ENCODE measurements at regions of chr15 and their contacts with region 1.

Region 1: GRCh38 chr15:99059010-99059981 is 45.6 kb upstream of the SYNM start:
- DNase-seq: peak; percentile 72
- ATAC-seq: peak; percentile 92
- H3K4me3 Mint-ChIP-seq: peak overlapping the region; percentile 53
- H3K27ac Mint-ChIP-seq: peak overlapping the region; percentile 60
- H3K4me1 Mint-ChIP-seq: peaks cover 6% of the 10 kb centered on the region
- H3K27me3 Mint-ChIP-seq: peaks cover 29% of the 10 kb centered on the region

Region 2: DNA sequence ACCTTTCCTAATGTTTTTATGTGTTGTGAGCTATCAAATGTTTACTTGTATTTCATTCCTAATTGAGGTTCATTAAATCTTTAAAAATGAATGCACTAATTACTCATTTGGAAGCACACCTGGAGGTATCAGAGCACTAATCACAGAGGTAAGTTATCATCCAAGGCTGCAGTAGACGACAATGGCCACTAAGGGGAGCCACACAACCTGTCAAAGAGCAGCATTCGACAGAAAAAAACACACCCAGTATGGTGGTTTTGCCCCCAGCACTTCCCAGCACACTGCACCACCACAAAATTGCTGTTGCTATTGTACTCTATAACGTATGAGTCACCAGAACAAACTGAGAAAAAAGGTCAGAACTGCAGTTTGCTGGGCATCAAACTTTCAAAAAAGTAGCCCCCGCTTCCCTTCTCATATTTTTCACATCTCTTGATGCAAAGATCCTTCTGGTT is 616.9 kb before region 1 on chr15:
- CTCF ChIA-PET with region 1: no interaction called
- POLR2A ChIA-PET with region 1: no interaction called
- intact Hi-C with region 1: loop called in 1 of 2 experiments (anchors 5 kb)
- DNase-seq: peak; percentile 81
- ATAC-seq: peak; percentile 97
- H3K4me3 Mint-ChIP-seq: no peak overlapping the region
- H3K27ac Mint-ChIP-seq: no peak overlapping the region
- H3K4me1 Mint-ChIP-seq: peaks cover 3% of the 10 kb centered on the region
- H3K27me3 Mint-ChIP-seq: peaks cover 9% of the 10 kb centered on the region

Region 3: GRCh38 chr15:98779463-98780071 is 279.7 kb before region 1 on chr15:
- CTCF ChIA-PET with region 1: interaction called, 3 read pairs
- POLR2A ChIA-PET with region 1: no interaction called
- intact Hi-C with region 1: loop called in 1 of 2 experiments (anchors 1 kb)
- DNase-seq: peak; percentile 87
- ATAC-seq: peak; percentile 90
- H3K4me3 Mint-ChIP-seq: no peak overlapping the region
- H3K27ac Mint-ChIP-seq: no peak overlapping the region
- H3K4me1 Mint-ChIP-seq: peaks cover 43% of the 10 kb centered on the region
- H3K27me3 Mint-ChIP-seq: no peaks in the 10 kb centered on the region

Region 4: DNA sequence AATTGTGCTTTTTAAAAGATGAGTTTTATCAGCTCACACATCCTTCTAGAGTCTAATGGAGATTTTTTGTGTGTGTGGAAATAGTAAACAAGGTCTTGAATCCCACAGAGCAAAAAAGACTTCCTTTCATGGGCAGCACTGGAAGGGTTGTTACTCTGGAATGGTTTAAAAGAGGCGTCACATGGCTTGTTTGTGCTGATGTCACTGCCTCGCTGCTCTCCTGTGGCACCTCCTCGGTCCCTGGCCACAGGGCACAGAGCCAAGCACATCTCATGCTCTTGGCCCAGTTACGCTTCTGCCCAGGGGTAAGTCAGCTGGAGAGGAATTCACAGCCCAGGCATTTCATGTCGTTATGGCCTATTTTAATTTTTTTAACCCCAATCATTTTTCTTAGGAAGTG is 104.9 kb before region 1 on chr15:
- CTCF ChIA-PET with region 1: no interaction called
- POLR2A ChIA-PET with region 1: no interaction called
- intact Hi-C with region 1: loop called (anchors 5 to 10 kb)
- DNase-seq: no peak
- ATAC-seq: no peak
- H3K4me3 Mint-ChIP-seq: no peak overlapping the region
- H3K27ac Mint-ChIP-seq: no peak overlapping the region
- H3K4me1 Mint-ChIP-seq: peaks cover 17% of the 10 kb centered on the region
- H3K27me3 Mint-ChIP-seq: no peaks in the 10 kb centered on the region

Region 5: DNA sequence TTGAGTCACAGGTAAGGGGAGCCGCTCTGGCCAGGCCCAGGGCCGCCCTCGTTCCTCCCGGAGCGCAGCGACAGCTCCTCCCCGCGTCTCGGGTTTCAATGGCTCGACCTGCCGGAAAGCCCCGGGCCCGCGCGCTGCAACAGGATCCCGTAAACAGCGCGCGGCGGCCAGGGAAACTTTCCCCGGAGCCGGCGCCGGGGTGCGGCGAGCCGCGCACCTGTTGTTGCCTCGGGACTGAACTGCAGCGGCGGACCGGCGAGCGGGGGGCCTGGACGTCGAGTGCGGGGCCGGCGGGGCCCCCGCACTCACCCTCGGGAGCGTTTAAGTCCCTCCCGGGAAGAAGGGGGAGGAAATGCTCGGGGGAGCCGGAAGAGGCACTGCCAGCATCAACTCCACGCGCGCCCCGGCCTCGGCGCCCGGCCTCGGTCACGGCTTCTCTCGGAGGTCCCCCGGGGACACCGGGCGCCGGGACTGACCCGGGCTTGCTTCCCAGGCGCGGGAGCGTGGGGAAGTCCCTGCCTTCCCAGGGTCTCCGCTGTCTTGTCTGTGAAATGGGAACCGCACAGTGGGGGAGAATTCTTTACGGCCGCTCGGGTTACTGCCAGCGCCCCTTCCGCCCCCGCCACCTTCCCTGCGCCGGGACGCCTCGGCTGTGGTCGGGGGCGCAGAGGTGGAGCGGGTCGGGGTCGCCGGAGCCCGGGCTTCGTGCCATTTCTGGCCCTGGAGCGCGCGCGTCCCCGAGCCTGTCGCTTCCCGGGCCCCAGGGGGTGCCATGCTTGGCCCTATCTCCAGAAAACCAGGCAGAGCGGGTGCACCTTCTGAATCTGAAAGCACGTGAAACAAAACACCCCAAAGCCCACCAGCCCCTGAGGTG is 44.3 kb before region 1 on chr15:
- CTCF ChIA-PET with region 1: interaction called, 3 read pairs
- POLR2A ChIA-PET with region 1: no interaction called
- intact Hi-C with region 1: loop called in 1 of 2 experiments (anchors 1 kb)
- DNase-seq: peak; percentile 84
- ATAC-seq: peak; percentile 95
- H3K4me3 Mint-ChIP-seq: peak overlapping the region; percentile 61
- H3K27ac Mint-ChIP-seq: no peak overlapping the region
- H3K4me1 Mint-ChIP-seq: peaks cover 10% of the 10 kb centered on the region
- H3K27me3 Mint-ChIP-seq: peaks cover 2% of the 10 kb centered on the region

Region 6: GRCh38 chr15:99070208-99070607 is 10.9 kb after region 1 on chr15:
- CTCF ChIA-PET with region 1: interaction called, 39 read pairs
- POLR2A ChIA-PET with region 1: no interaction called
- intact Hi-C with region 1: no loop called
- DNase-seq: no peak
- ATAC-seq: no peak
- H3K4me3 Mint-ChIP-seq: no peak overlapping the region
- H3K27ac Mint-ChIP-seq: no peak overlapping the region
- H3K4me1 Mint-ChIP-seq: no peaks in the 10 kb centered on the region
- H3K27me3 Mint-ChIP-seq: peaks cover 1% of the 10 kb centered on the region

Region 7: GRCh38 chr15:99076552-99077308 is 17.4 kb after region 1 on chr15:
- CTCF ChIA-PET with region 1: interaction called, 39 read pairs
- POLR2A ChIA-PET with region 1: no interaction called
- intact Hi-C with region 1: no loop called
- DNase-seq: peak; percentile 58
- ATAC-seq: peak; percentile 87
- H3K4me3 Mint-ChIP-seq: peak overlapping the region; percentile 65
- H3K27ac Mint-ChIP-seq: peak overlapping the region; percentile 89
- H3K4me1 Mint-ChIP-seq: peaks cover 6% of the 10 kb centered on the region
- H3K27me3 Mint-ChIP-seq: peaks cover 10% of the 10 kb centered on the region

Measured in activated CD4-positive, alpha-beta T cell treated with anti-CD3 and anti-CD28 coated beads for 36 hours (primary cell).